Esophagus squamous epithelium (tissue), 5 donors: ENCODE measurements at regions of chr22 and their contacts with region 1.

Region 1: GRCh38 chr22:26318975-26319374 is 110.1 kb upstream of the ASPHD2 start:
- DNase-seq: no peak
- H3K4me3 ChIP-seq: no peak overlapping the region
- H3K27ac ChIP-seq: no peak overlapping the region
- H3K4me1 ChIP-seq: no peaks in the 10 kb centered on the region
- H3K27me3 ChIP-seq: peaks cover 0 to 21% (median 0%) of the 10 kb centered on the region in 4 donors
- CTCF ChIP-seq: no peak
- POLR2A ChIP-seq: no peak

Region 2: GRCh38 chr22:25802018-25802417 is 517.0 kb before region 1 on chr22:
- intact Hi-C with region 1: loop called (anchors 10 kb)
- DNase-seq: no peak
- H3K4me3 ChIP-seq: no peak overlapping the region
- H3K27ac ChIP-seq: no peak overlapping the region
- H3K4me1 ChIP-seq: no peaks in the 10 kb centered on the region
- H3K27me3 ChIP-seq: peaks cover 0 to 29% (median 0%) of the 10 kb centered on the region in 4 donors
- CTCF ChIP-seq: no peak
- POLR2A ChIP-seq: no peak